ENCODE measurements at regions of chr6 and their contacts with region 1.

Region 1: DNA sequence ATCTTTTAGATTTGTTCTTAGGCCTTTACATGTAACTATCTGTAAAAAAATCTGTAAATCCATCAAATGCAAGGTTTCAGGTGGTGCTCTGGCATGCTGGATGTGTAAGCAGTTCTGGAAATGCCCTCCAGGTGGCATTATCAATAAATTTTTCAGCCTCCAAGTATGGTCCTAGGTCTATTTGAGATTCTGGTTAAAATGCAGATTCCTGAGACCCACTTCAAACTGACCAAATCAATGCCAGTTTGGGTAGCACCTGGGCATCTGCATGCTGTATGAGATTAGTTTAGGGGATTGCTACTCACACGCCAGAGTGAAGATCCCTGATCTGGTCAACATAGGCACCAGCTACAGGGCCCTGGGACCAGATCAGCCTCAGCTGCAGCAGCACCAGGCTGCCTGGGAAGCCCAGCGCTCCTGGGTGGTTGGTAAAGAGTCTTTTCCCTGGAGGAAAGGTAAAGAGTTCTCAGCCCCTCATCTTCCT is 507.3 kb upstream of the CITED2 start:
- DNase-seq: no peak
- H3K4me3 ChIP-seq: no peak overlapping the region
- CTCF ChIP-seq: peak; percentile 24

Region 2: DNA sequence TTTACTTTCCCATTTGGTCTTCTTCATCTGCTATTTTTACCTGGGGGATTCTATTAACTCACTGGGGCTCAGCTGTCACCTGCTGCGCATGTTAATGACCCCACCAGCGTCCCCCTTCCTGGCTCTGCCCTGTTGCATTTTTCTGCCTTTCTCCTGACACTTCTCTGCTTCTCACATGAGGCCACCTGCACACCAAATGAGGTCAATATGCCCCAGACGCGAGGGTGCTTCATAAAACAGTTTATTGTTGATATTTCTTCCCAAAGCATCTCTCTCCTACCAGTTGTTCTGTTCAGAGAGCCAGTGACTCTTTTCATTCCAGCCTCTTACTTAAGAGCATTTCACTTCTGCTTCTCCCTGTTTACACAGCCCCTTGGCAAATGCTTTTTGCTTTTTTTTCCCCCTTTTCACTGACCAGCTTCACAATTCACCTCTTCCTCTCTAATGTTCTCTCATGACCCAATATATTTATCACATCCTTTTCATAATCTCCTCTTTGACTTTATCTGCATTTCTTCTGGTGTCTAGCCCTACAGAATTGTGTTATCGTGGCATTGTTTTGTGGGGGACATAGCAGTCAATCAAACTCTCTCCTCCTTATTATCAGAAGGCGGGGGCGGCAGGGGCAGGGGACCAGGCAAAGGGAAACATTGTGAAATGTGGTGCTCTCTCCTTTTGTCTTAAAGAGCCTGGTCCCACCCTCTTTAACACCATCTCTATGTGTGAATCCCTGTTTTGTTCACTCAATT is 38.4 kb after region 1 on chr6:
- CTCF ChIA-PET with region 1: interaction called, 11 read pairs
- POLR2A ChIA-PET with region 1: no interaction called
- DNase-seq: no peak
- H3K4me3 ChIP-seq: no peak overlapping the region
- CTCF ChIP-seq: no peak

Region 3: DNA sequence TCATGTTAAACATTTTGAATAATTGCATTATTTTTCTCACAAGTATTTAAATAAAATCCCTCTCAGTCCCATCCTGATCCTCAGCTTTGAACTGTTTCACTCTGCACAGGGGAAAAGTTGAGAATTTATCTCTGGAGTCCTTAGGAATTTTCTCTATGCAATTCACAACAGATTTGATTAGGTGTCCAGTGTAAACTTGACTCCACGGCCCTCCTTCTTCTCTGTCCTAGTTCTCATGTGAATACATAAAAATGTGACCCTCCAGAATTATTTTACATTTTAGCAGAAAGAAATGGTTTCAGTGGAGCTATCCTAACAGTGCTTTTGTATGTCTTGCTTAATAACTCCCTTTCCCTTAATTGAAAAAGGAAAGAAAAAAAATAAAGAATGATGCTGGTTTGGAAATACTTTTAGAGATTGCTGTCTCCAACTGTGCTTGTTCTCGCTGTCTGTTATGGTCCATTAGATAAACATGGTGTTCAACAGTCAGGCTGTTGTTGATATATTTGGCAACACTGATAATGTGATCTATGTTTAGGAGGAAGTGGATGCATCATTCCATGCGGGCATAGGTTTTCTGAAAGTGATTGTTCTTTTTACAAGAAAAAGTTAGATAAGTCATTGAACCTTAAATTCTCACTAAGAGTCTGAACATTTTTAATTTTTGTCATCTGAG is 92.0 kb after region 1 on chr6:
- CTCF ChIA-PET with region 1: no interaction called
- POLR2A ChIA-PET with region 1: no interaction called
- DNase-seq: no peak
- H3K4me3 ChIP-seq: no peak overlapping the region
- CTCF ChIP-seq: no peak

Measured in AG04449 (cell line).